ENCODE measurements at regions of chr10 and their contacts with region 1.

Region 1: DNA sequence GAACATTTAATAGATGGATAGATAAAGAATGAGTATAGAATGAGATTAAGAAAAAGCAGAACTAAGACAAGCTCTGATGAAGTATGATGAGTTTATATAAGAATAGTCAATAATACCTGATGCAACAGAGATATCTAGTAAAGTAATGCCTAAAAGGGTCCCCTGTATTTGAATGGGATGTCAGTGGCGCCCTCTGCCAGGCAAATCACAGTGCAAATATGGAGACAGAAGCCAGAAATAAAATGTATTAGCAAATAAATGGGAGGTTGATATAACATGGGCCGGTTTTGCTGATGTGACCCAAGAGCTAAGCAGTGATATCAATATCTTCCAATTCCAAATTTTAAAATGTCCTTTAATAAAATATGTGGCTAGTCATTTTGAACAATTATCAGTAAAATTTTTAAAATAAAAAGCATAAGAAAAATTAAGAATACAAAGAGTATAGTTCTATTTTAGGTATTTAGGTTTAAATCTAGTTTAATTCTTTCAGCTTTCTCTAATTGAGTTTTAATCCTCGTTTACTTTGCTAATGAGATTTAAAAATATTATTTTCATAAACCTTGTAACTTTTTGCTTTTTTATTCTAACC is 62.6 kb downstream of the ADK start:
- DNase-seq: no peak
- H3K4me3 ChIP-seq: no peak overlapping the region
- CTCF ChIP-seq: no peak
- POLR2A ChIP-seq: no peak

Region 2: GRCh38 chr10:73956476-73957359 is 256.9 kb before region 1 on chr10:
- intact Hi-C with region 1: no loop called
- DNase-seq: no peak
- H3K4me3 ChIP-seq: no peak overlapping the region
- CTCF ChIP-seq: no peak
- POLR2A ChIP-seq: no peak

Region 3: DNA sequence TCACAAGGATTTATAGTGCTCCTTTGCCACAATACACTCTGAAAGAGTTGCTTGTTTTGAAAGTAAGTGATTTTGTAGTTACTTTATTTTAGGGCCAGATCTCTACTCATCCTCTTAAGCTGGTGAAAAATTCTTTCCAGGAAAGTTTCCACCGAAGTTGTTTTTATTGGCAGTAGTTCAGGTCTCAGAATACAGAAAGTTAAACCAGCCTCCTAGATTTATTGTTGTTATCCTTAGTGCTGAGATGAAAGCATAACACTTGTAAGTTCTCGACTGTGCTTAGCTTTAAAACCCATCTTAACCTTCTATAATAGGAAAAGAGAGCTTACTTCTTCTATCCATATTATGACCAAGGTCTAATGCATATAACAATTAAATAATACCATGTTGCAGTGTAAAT is 68.5 kb before region 1 on chr10:
- intact Hi-C with region 1: loop called (anchors 10 kb)
- DNase-seq: no peak
- H3K4me3 ChIP-seq: no peak overlapping the region
- CTCF ChIP-seq: no peak
- POLR2A ChIP-seq: no peak

Region 4: DNA sequence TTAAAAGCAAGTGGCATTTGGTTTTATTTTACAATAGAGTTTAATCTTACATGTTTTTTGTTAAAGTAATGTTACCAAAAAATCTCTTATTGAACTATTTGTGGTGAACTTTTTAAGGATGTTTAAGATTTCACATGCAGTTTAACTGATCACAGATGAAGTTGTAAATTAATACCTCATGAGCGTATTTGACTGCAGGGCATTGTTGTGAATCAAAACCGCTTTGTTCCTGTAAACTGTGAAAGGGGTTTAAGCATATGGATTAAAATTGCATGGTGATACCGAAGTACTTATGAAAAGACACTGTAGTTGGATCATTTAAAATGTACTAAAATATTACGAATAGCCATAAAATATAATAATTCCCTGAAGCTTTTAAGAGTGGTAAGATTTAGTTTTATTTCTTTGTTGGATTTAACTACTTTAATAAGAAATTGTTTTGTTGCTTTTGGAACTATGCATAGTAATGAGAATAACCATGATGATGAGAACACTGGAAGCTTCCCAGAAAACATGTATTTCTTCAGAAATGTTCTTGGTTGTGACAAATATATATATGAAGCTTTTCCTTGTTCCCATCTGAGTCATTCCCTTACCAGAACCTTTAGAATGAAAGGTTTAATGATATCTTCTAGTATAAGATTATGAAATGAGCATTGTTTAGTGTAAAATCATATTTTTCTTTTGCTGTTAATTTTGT is 68.6 kb after region 1 on chr10:
- intact Hi-C with region 1: no loop called
- DNase-seq: no peak
- H3K4me3 ChIP-seq: no peak overlapping the region
- CTCF ChIP-seq: no peak
- POLR2A ChIP-seq: no peak

Region 5: DNA sequence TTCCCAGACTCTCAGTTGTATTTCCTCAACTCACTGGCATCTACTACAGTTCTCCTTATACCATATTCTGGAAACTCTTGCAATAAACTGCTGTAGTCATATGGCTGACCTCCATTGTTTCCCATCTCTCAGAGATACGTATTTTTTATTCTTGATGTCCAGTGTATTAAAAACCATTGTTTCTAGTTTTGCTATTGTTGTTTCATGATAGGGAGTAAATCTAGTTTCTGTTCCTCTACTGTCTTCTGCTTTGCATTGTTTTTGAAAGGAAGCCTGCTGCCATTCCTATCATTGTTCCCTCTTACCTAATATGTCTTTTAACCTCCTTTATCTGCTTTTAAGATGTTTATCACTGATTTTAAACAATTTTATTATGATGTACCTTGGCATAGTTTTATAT is 192.3 kb after region 1 on chr10:
- intact Hi-C with region 1: no loop called
- DNase-seq: no peak
- H3K4me3 ChIP-seq: no peak overlapping the region
- CTCF ChIP-seq: no peak
- POLR2A ChIP-seq: no peak